ENCODE measurements at regions of chr16 and their contacts with region 1.

Region 1: GRCh38 chr16:31142109-31143010 is 6.8 kb upstream of the PRSS8 start:
- DNase-seq: peak; percentile 99
- ATAC-seq: peak; percentile 95
- H3K4me3 ChIP-seq: peak overlapping the region in 4 of 5 experiments; percentile 21 to 71 (median 50)
- H3K4me3 Mint-ChIP-seq: peak overlapping the region; percentile 76
- H3K27ac ChIP-seq: peak overlapping the region; percentile 21 to 54
- H3K27ac Mint-ChIP-seq: peak overlapping the region; percentile 88
- H3K4me1 ChIP-seq: peaks cover 6 to 13% of the 10 kb centered on the region in 2 donors
- H3K4me1 Mint-ChIP-seq: peaks cover 9% of the 10 kb centered on the region
- H3K27me3 ChIP-seq: no peaks in the 10 kb centered on the region
- H3K27me3 Mint-ChIP-seq: peaks cover 6% of the 10 kb centered on the region
- CTCF ChIP-seq: peak; percentile 90

Region 2: DNA sequence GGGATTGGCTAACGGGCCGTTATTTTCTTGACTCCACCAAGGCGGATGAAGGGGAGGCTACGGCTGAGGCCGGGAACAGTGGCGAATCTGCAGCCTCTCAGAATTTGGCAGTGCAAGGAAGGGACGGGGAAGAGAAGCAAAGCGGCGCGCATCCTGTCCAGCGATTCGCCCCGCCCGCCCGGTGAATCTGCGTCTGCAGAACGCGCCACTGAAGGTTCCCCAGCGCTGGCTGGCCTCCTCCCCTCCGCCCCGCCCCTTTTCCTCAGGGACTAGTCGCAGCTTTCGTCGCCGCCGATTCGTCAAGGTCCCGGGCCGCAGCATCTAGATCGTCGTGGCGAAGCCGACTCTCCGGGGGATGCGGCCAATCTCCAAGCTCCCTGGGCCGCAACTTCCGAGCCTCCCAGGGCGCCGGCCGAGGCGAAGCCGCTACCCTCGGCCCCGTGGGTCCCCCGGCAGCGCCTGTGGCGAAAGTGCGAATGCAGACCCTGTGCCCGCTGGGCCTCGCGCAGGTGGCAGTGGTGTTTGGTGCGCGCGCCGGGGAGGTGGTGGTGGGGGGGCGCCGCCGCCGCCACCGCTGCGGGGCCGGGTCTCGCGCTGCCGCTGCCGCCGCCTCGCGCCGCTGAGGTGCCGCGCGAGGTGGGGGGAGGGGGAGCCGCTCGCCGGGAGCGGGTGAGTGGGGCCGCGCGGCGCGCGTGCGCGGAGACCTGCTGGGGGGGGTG is 184.7 kb before region 1 on chr16 and contains the start of gene SETD1A:
- CTCF ChIA-PET with region 1: interaction called, 4 read pairs
- POLR2A ChIA-PET with region 1: no interaction called
- intact Hi-C with region 1: loop called (anchors 1 kb)
- DNase-seq: peak; percentile 99
- ATAC-seq: peak; percentile 83
- H3K4me3 ChIP-seq: peak within 1 kb of the TSS; percentile 85 to 99 (median 95)
- H3K4me3 Mint-ChIP-seq: peak within 1 kb of the TSS; percentile 97
- H3K27ac ChIP-seq: peak within 1 kb of the TSS; percentile 92 to 96
- H3K27ac Mint-ChIP-seq: peak within 1 kb of the TSS; percentile 99
- H3K4me1 ChIP-seq: peaks cover 15 to 25% of the 10 kb centered on the region in 2 donors
- H3K4me1 Mint-ChIP-seq: peaks cover 40% of the 10 kb centered on the region
- H3K27me3 ChIP-seq: no peaks in the 10 kb centered on the region
- H3K27me3 Mint-ChIP-seq: no peaks in the 10 kb centered on the region
- CTCF ChIP-seq: no peak
- total RNA-seq, gene SETD1A: 37.2 and 39.5 TPM in 2 replicates

Region 3: DNA sequence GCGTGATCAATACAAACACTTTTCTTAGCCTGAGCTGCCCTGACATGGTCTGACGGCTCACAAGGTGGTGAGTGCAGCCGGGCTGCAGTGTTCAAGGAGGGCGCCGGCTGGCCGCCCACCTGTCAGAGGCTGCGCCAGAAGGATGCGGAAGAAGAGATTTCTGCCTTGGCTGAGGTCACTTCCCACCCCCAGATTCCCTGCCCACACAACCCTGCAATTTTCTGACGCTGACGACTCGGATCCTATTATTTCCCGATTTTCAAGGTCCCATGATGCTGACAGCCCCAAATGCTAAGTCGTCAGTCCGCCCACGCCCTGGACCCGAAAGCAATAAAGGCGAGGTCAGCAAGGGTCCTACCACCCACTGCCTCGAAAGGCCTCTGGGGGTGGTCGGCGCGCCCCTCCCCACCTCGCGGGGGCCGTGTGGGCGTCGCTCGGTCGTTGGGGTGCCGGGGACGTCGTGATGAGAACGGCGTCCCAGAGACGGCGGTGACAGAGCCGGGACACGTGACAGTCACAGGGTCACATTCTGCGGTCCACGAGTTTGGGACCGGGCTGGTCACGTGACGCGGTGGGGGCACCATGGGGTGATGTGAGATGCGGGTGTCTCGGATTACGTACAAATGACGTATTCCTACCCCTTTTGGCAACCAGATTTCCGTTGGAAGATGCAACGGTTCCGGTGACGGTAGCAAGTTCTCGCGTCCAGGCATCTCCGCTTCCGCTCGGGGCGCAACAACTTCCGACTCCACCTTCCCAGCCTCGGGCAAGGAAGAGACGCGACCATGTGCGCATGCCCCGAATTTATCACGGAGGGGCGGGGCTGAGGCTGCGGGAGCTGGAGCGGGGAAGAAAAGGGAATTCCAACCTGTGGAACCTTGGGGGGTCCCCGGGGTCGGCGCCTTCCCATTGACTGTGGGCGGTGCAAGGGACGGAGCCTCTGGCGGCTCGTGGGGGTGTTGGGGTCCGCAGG is 109.3 kb before region 1 on chr16 and contains the start of gene STX4:
- CTCF ChIA-PET with region 1: interaction called, 3 read pairs
- POLR2A ChIA-PET with region 1: no interaction called
- intact Hi-C with region 1: loop called (anchors 1 kb)
- DNase-seq: peak; percentile 100
- ATAC-seq: peak; percentile 76
- H3K4me3 ChIP-seq: peak within 1 kb of the TSS; percentile 76 to 99 (median 90)
- H3K4me3 Mint-ChIP-seq: peak within 1 kb of the TSS; percentile 95
- H3K27ac ChIP-seq: peak within 1 kb of the TSS; percentile 99 to 100
- H3K27ac Mint-ChIP-seq: peak within 1 kb of the TSS; percentile 99
- H3K4me1 ChIP-seq: peaks cover 8 to 16% of the 10 kb centered on the region in 2 donors
- H3K4me1 Mint-ChIP-seq: peaks cover 21% of the 10 kb centered on the region
- H3K27me3 ChIP-seq: no peaks in the 10 kb centered on the region
- H3K27me3 Mint-ChIP-seq: no peaks in the 10 kb centered on the region
- CTCF ChIP-seq: no peak
- total RNA-seq, gene STX4: 111 and 120 TPM in 2 replicates

Region 4: DNA sequence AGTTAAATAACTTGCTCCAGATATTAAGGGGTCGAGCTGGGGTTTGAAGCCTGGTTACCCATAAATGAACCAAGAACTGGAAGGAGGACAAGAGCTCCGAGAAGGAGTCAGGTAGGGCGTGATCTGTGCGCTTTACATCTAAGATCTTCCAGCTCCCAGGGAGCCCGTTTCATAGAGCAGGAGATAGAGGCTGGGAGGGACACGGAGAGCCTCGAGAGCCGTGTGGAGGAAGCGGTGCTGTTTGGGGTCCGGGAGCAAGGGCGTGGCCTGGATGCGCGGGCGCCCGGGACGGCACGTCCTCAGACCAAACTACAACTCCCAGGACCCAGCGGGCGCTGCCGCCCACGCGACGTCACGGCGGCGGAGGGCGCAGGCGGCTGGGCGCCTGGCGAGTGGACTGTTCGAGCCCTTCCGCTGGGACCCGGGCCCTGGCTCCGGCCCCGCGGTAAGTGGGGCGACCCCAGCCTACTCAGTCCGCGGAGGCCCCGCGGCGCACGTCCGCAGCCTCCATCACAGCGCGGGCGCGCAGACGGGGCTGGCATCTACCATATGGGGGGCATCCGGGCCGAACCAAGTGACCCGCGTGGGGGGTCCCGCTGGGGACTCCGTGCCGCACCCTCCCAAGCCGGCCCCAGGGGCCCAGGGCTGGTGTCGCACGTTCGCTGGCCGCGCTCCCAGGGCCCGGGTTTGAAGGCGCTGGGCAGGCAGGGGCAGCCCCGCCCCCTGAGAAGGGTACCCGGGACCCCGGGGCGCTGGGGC is 34.1 kb before region 1 on chr16 and contains the start of gene BCKDK:
- CTCF ChIA-PET with region 1: interaction called, 4 read pairs
- POLR2A ChIA-PET with region 1: no interaction called
- intact Hi-C with region 1: loop called (anchors 2 kb)
- DNase-seq: peak; percentile 74
- ATAC-seq: peak; percentile 77
- H3K4me3 ChIP-seq: peak within 1 kb of the TSS; percentile 41 to 82 (median 78)
- H3K4me3 Mint-ChIP-seq: peak within 1 kb of the TSS; percentile 91
- H3K27ac ChIP-seq: peak within 1 kb of the TSS in 1 of 2 donors; percentile 72
- H3K27ac Mint-ChIP-seq: peak within 1 kb of the TSS; percentile 82
- H3K4me1 ChIP-seq: peaks cover 7 to 18% of the 10 kb centered on the region in 2 donors
- H3K4me1 Mint-ChIP-seq: peaks cover 21% of the 10 kb centered on the region
- H3K27me3 ChIP-seq: no peaks in the 10 kb centered on the region
- H3K27me3 Mint-ChIP-seq: no peaks in the 10 kb centered on the region
- CTCF ChIP-seq: no peak
- total RNA-seq, gene BCKDK: 24.7 and 29.7 TPM in 2 replicates

Region 5: GRCh38 chr16:31179747-31180459 is 37.5 kb after region 1 on chr16 and contains the start of gene FUS:
- CTCF ChIA-PET with region 1: interaction called, 17 read pairs
- POLR2A ChIA-PET with region 1: interaction called, 44 read pairs
- intact Hi-C with region 1: loop called (anchors 1 kb)
- DNase-seq: peak; percentile 98
- ATAC-seq: peak; percentile 71
- H3K4me3 ChIP-seq: peak within 1 kb of the TSS; percentile 58 to 98 (median 91)
- H3K4me3 Mint-ChIP-seq: peak within 1 kb of the TSS; percentile 99
- H3K27ac ChIP-seq: peak within 1 kb of the TSS; percentile 90 to 93
- H3K27ac Mint-ChIP-seq: peak within 1 kb of the TSS; percentile 100
- H3K4me1 ChIP-seq: peaks cover 41 to 56% of the 10 kb centered on the region in 2 donors
- H3K4me1 Mint-ChIP-seq: peaks cover 58% of the 10 kb centered on the region
- H3K27me3 ChIP-seq: no peaks in the 10 kb centered on the region
- H3K27me3 Mint-ChIP-seq: no peaks in the 10 kb centered on the region
- CTCF ChIP-seq: no peak
- total RNA-seq, gene FUS: 585 and 597 TPM in 2 replicates

Region 6: DNA sequence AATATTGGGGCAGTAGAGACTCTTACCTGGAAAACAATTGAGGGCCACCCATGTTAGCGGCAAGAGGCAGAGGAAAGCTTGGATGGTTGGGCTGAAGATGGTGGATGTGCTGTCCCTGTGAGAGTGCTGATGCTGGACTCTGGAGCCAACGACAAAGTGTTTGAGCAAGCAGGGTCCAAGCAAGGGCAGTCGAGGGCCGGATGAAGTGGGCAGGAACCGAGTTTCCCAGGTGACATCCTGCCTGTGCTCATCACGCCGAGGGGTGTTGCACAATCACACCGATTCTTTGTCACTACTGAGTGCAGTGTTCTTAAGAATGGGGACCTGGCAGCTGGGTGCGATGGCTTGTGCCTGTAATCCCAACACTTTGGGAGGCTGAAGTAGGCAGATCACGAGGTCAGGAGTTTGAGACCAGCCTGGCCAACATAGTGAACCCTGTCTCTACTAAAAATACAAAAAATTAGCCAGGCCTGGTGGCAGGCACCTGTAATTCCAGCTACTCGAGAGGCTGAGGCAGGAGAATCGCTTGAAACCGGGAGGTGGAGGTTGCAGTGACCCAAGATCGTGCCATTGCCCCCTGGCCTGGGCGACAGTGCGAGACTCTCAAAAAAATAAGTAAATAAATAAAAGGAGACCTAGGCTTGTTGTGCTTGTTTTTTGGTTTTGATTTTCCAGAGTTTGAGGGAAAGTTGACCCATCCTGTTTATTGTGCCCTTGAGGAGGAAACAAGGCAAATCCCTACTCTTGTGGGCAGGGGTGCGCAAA is 54.1 kb after region 1 on chr16:
- CTCF ChIA-PET with region 1: no interaction called
- POLR2A ChIA-PET with region 1: no interaction called
- intact Hi-C with region 1: no loop called
- DNase-seq: peak; percentile 15
- ATAC-seq: no peak
- H3K4me3 ChIP-seq: no peak overlapping the region
- H3K4me3 Mint-ChIP-seq: no peak overlapping the region
- H3K27ac ChIP-seq: no peak overlapping the region
- H3K27ac Mint-ChIP-seq: peak overlapping the region; percentile 46
- H3K4me1 ChIP-seq: peaks cover 17 to 23% of the 10 kb centered on the region in 2 donors
- H3K4me1 Mint-ChIP-seq: peaks cover 42% of the 10 kb centered on the region
- H3K27me3 ChIP-seq: no peaks in the 10 kb centered on the region
- H3K27me3 Mint-ChIP-seq: no peaks in the 10 kb centered on the region
- CTCF ChIP-seq: no peak

Region 7: GRCh38 chr16:31440516-31441184 is 298.3 kb after region 1 on chr16:
- CTCF ChIA-PET with region 1: interaction called, 3 read pairs
- POLR2A ChIA-PET with region 1: no interaction called
- intact Hi-C with region 1: loop called (anchors 1 kb)
- DNase-seq: no peak
- ATAC-seq: no peak
- H3K4me3 ChIP-seq: no peak overlapping the region
- H3K4me3 Mint-ChIP-seq: no peak overlapping the region
- H3K27ac ChIP-seq: no peak overlapping the region
- H3K27ac Mint-ChIP-seq: no peak overlapping the region
- H3K4me1 ChIP-seq: peaks cover 11 to 12% of the 10 kb centered on the region in 2 donors
- H3K4me1 Mint-ChIP-seq: peaks cover 19% of the 10 kb centered on the region
- H3K27me3 ChIP-seq: peaks cover 0 to 6% (median 2%) of the 10 kb centered on the region in 4 experiments
- H3K27me3 Mint-ChIP-seq: peaks cover 3% of the 10 kb centered on the region
- CTCF ChIP-seq: no peak

Region 8: DNA sequence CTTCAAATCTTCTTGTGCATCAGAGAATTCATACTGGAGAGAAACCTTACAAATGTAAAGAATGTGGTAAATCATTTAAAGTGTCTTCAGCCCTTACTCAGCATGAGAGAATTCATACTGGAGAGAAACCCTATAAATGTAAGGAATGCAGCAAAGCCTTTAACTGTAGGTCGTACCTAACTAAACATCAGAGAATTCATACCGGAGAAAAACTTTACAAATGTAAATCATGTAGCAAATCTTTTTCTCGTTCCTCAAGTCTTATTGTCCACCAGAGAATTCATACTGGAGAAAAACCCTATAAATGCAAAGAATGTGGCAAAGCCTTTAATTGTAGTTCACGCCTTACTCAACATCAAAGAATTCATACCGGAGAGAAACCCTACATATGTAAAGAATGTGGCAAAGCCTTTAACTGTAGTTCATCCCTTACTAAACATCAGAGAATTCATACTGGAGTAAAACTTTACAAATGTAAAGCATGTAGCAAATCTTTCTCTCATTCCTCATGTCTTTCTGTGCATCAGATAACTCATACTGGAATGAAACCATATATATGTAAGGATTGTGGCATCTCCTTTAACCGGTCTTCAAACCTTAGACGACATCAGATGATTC is 612.7 kb after region 1 on chr16:
- CTCF ChIA-PET with region 1: no interaction called
- POLR2A ChIA-PET with region 1: no interaction called
- intact Hi-C with region 1: no loop called
- DNase-seq: no peak
- ATAC-seq: no peak
- H3K4me3 ChIP-seq: no peak overlapping the region
- H3K4me3 Mint-ChIP-seq: no peak overlapping the region
- H3K27ac ChIP-seq: no peak overlapping the region
- H3K27ac Mint-ChIP-seq: no peak overlapping the region
- H3K4me1 ChIP-seq: no peaks in the 10 kb centered on the region
- H3K4me1 Mint-ChIP-seq: no peaks in the 10 kb centered on the region
- H3K27me3 ChIP-seq: no peaks in the 10 kb centered on the region
- H3K27me3 Mint-ChIP-seq: no peaks in the 10 kb centered on the region
- CTCF ChIP-seq: no peak

Measured in B cell (primary cell).